K562 (cell line): ENCODE measurements at regions of chr1 and their contacts with region 1.

Region 1: GRCh38 chr1:167627865-167628641 is 2.0 kb upstream of the RCSD1 start:
- DNase-seq: peak; percentile 92 to 98 (median 92)
- ATAC-seq: peak; percentile 80
- H3K4me3 ChIP-seq: peak overlapping the region; percentile 77
- H3K27ac ChIP-seq: peak overlapping the region; percentile 97
- H3K4me1 ChIP-seq: peaks cover 36 to 55% of the 10 kb centered on the region in 2 experiments
- H3K27me3 ChIP-seq: no peaks in the 10 kb centered on the region
- CTCF ChIP-seq: no peak
- EP300 ChIP-seq: peak; percentile 98
- POLR2A ChIP-seq: peak; percentile 96
- RAD21 ChIP-seq: peak in 1 of 2 experiments; percentile 19; a peak in 2 of 4 replicates

Region 2: GRCh38 chr1:167220537-167221125 is 407.4 kb before region 1 on chr1 and contains the start of gene POU2F1:
- CTCF ChIA-PET with region 1: no interaction called
- POLR2A ChIA-PET with region 1: no interaction called
- in situ Hi-C with region 1: no loop called
- intact Hi-C with region 1: loop called (anchors 5 kb)
- DNase-seq: peak; percentile 96 to 99 (median 97)
- ATAC-seq: peak; percentile 82
- H3K4me3 ChIP-seq: peak within 1 kb of the TSS; percentile 69
- H3K27ac ChIP-seq: peak within 1 kb of the TSS; percentile 95
- H3K4me1 ChIP-seq: peaks cover 17 to 26% of the 10 kb centered on the region in 2 experiments; a peak in 4 of 5 replicates
- H3K27me3 ChIP-seq: no peaks in the 10 kb centered on the region
- CTCF ChIP-seq: peak; percentile 62 to 93 (median 93)
- EP300 ChIP-seq: no peak
- POLR2A ChIP-seq: no peak; the same call in none of the 2 replicates
- RAD21 ChIP-seq: peak; percentile 48 to 59
- polyA plus RNA-seq, gene POU2F1: 2.6 to 6.0 TPM

Region 3: GRCh38 chr1:167496797-167497619 is 131.0 kb before region 1 on chr1:
- CTCF ChIA-PET with region 1: no interaction called
- POLR2A ChIA-PET with region 1: no interaction called
- in situ Hi-C with region 1: no loop called
- intact Hi-C with region 1: no loop called
- DNase-seq: no peak
- ATAC-seq: no peak
- H3K4me3 ChIP-seq: no peak overlapping the region
- H3K27ac ChIP-seq: no peak overlapping the region
- H3K4me1 ChIP-seq: peaks cover 0 to 5% of the 10 kb centered on the region in 2 experiments; a peak in 2 of 5 replicates
- H3K27me3 ChIP-seq: peaks cover 73 to 80% of the 10 kb centered on the region in 2 experiments
- CTCF ChIP-seq: no peak
- EP300 ChIP-seq: no peak
- POLR2A ChIP-seq: no peak
- RAD21 ChIP-seq: no peak

Region 4: DNA sequence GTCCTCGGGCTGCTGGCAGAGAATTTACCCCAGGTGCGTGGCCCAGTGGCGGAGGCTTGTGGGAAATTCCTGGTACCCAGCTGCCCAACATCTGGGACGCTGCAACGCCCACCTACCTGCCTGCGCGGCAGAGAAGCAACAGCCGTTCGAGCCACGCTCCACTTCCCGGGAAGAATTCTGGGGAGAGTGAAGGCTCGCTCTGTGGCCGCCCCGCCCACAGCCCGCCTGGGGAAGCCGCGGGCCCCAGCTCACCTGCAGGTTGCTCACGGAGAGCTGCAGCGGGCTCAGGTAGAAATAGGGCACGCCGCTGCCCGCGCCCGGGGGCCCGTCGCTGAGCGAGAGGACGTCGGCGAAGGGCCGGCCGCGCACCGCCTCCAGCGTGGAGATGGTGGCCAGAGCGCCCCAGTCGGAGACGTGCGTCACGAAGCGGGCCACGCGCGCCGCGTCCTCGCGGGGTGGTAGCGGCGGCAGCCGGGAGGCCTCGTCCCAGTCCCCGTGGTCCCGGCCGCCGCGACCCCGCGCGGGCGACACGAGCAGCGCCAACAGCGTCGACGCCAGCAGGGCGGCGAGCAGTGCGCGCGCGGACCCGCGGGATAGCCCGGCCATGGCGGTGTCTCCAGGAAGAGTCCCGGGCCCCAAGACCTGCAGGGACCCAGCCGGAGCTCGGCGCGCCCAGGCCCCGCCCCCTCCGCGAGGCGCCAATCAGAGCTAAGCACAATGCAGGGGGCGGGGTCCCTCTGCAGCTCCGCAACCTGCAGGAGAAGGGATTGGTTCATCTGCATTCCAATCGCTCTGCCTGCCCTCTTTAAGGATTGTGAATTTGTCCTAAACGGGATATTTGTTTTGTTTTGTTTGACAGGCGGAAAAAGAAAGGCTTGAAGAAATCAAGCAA is 74.7 kb before region 1 on chr1 and contains the start of gene CREG1:
- CTCF ChIA-PET with region 1: no interaction called
- POLR2A ChIA-PET with region 1: interaction called, 17 read pairs
- in situ Hi-C with region 1: no loop called
- intact Hi-C with region 1: loop called (anchors 1 kb)
- DNase-seq: peak; percentile 98 to 99 (median 98)
- ATAC-seq: peak; percentile 93
- H3K4me3 ChIP-seq: peak within 1 kb of the TSS; percentile 73
- H3K27ac ChIP-seq: peak within 1 kb of the TSS; percentile 70
- H3K4me1 ChIP-seq: peaks cover 23 to 45% of the 10 kb centered on the region in 2 experiments
- H3K27me3 ChIP-seq: no peaks in the 10 kb centered on the region
- CTCF ChIP-seq: peak in 2 of 3 experiments; percentile 24 to 41; a peak in 2 of 6 replicates
- EP300 ChIP-seq: 0 out of 2 replicates have a peak, but pooled peaks have one; percentile 9
- POLR2A ChIP-seq: peak; percentile 82
- RAD21 ChIP-seq: peak in 1 of 2 experiments; percentile 12; a peak in 1 of 4 replicates
- polyA plus RNA-seq, gene CREG1: 45.7 to 58.2 TPM

Region 5: GRCh38 chr1:167599957-167600581 is 28.0 kb before region 1 on chr1:
- CTCF ChIA-PET with region 1: no interaction called
- POLR2A ChIA-PET with region 1: interaction called, 6 read pairs
- in situ Hi-C with region 1: no loop called
- intact Hi-C with region 1: loop called (anchors 1 kb)
- DNase-seq: peak; percentile 46 to 72 (median 57)
- ATAC-seq: peak; percentile 87
- H3K4me3 ChIP-seq: no peak overlapping the region
- H3K27ac ChIP-seq: 0 out of 3 replicates have a peak overlapping the region, but pooled peaks have one; percentile 19
- H3K4me1 ChIP-seq: peaks cover 13 to 22% of the 10 kb centered on the region in 2 experiments; a peak in 4 of 5 replicates
- H3K27me3 ChIP-seq: no peaks in the 10 kb centered on the region
- CTCF ChIP-seq: peak; percentile 61 to 91 (median 80)
- EP300 ChIP-seq: no peak; the same call in 1 of the 2 replicates
- POLR2A ChIP-seq: no peak
- RAD21 ChIP-seq: peak; percentile 93 to 97

Region 6: DNA sequence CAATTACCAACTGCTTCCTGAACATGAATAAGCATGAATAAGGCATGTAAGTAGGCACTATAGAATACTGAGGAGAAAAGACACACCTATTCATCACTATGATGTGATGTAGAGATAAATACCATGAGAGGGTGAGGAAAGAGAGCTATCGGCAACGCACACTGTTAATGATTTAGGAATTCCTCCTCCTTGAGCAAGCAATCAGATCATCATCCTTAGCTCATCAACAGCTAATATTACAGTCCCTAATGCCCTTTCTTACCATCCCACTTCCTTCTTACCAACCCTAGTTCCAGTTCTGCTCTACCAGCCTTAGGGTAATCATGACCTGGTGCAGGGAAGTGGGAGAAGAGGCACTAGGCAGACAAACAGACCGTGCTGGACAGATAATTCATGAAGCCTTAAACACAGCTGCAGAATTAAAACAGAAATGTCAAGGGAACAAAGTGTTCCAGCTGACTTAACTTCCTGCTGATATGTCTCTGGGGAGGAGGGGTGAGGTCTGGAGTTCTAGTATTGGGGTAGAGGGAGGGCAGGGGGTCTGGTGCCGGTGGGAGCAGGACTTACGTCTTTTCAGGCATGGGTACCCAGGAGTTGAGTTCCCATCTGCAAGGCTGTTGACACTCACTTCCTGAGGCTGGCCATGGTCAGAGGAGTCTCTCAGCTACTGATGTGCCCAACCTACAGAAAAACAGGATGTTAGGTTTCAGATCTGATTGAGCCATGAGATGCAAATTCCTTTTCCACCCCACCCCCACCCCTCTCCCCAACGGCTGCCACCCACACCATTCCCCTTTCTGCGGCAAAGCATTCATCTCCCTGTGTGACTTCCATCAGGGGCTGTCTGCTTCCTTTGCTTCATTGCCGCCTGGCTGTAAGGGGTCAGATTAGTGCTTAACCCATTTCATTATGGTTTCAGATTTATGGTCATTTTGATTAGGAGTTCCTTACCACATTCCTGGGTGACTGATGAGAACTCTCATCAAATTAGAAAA is 10.6 kb before region 1 on chr1:
- CTCF ChIA-PET with region 1: no interaction called
- POLR2A ChIA-PET with region 1: interaction called, 37 read pairs
- in situ Hi-C with region 1: no loop called
- intact Hi-C with region 1: loop called (anchors 1 kb)
- DNase-seq: peak; percentile 53 to 78 (median 68)
- ATAC-seq: peak; percentile 86
- H3K4me3 ChIP-seq: peak overlapping the region; percentile 23
- H3K27ac ChIP-seq: peak overlapping the region; percentile 81
- H3K4me1 ChIP-seq: peaks cover 16 to 40% of the 10 kb centered on the region in 2 experiments
- H3K27me3 ChIP-seq: no peaks in the 10 kb centered on the region
- CTCF ChIP-seq: no peak
- EP300 ChIP-seq: peak; percentile 84
- POLR2A ChIP-seq: peak; percentile 56
- RAD21 ChIP-seq: no peak; a peak in 1 of 4 replicates

Region 7: DNA sequence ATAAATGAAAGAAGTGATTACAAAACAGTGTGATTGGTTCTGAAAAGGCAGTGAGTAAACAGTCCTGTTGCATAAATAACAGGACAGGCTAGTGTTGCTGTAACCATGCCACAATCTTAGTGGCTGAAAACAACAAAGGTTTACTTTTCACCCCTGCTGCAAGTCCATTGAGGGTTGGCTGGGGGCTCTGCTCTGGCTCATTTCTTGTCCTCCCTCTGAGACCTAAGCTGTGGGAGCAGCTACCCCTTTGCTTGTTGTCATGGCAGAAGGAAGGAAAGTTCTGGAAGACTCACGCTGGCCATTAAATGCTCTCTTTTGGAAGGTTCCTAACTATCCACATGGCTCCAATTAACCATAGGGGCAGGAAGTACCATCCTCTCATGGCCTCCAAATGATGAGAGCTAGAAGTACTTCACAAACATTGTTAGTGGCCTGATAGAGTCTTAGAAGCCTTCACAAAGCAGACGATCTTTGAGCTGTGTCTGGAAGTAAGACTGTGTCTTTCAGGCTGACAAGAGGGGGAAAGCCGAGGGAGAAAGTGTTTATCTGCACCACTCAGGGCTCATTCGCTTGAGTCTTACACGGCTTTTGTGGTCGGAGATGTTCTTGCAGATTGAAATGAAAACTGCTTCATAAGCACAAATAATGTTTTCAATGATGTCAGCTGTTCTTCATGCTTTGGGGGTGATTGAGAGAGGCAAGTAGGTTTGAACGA is 13.9 kb after region 1 on chr1:
- CTCF ChIA-PET with region 1: no interaction called
- POLR2A ChIA-PET with region 1: interaction called, 93 read pairs
- in situ Hi-C with region 1: no loop called
- intact Hi-C with region 1: no loop called
- DNase-seq: peak in 2 of 4 experiments; percentile 63 to 79
- ATAC-seq: peak; percentile 75
- H3K4me3 ChIP-seq: no peak overlapping the region
- H3K27ac ChIP-seq: peak overlapping the region; percentile 57
- H3K4me1 ChIP-seq: peaks cover 9 to 38% of the 10 kb centered on the region in 2 experiments; a peak in 4 of 5 replicates
- H3K27me3 ChIP-seq: no peaks in the 10 kb centered on the region
- CTCF ChIP-seq: no peak
- EP300 ChIP-seq: peak; percentile 13; the same call in 1 of the 2 replicates
- POLR2A ChIP-seq: 0 out of 2 replicates have a peak, but pooled peaks have one; percentile 42
- RAD21 ChIP-seq: no peak

Region 8: GRCh38 chr1:167650269-167651160 is 22.5 kb after region 1 on chr1:
- CTCF ChIA-PET with region 1: no interaction called
- POLR2A ChIA-PET with region 1: interaction called, 93 read pairs
- in situ Hi-C with region 1: no loop called
- intact Hi-C with region 1: no loop called
- DNase-seq: no peak
- ATAC-seq: peak; percentile 55
- H3K4me3 ChIP-seq: no peak overlapping the region
- H3K27ac ChIP-seq: no peak overlapping the region
- H3K4me1 ChIP-seq: peaks cover 9 to 10% of the 10 kb centered on the region in 2 experiments; a peak in 4 of 5 replicates
- H3K27me3 ChIP-seq: no peaks in the 10 kb centered on the region
- CTCF ChIP-seq: no peak
- EP300 ChIP-seq: no peak
- POLR2A ChIP-seq: no peak
- RAD21 ChIP-seq: no peak

Region 9: DNA sequence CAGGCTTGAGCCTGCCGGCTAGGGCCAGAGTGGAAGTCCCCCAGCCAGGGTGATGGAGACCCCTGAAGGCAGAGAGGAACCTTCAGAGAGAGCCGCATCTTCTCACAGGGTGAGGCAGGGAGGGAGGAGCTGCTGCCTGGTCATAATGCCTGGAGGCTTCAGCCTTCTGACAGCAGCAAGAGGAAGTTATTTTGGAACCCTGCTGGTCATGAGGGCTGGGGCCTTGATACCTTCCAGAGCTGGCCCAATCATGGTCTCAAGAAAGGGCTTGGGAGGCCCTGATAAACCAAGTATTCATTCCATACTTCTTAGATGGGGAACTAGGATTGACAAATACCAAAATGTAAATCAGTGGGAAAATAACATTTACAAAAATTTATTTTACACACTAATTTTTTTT is 67.1 kb after region 1 on chr1:
- CTCF ChIA-PET with region 1: no interaction called
- POLR2A ChIA-PET with region 1: no interaction called
- in situ Hi-C with region 1: no loop called
- intact Hi-C with region 1: no loop called
- DNase-seq: peak in 1 of 4 experiments; percentile 51
- ATAC-seq: peak; percentile 62
- H3K4me3 ChIP-seq: no peak overlapping the region
- H3K27ac ChIP-seq: no peak overlapping the region
- H3K4me1 ChIP-seq: no peaks in the 10 kb centered on the region; a peak in 1 of 5 replicates
- H3K27me3 ChIP-seq: no peaks in the 10 kb centered on the region
- CTCF ChIP-seq: no peak
- EP300 ChIP-seq: no peak
- POLR2A ChIP-seq: no peak
- RAD21 ChIP-seq: no peak

Region 10: GRCh38 chr1:167899253-167899681 is 271.2 kb after region 1 on chr1:
- CTCF ChIA-PET with region 1: no interaction called
- POLR2A ChIA-PET with region 1: no interaction called
- in situ Hi-C with region 1: no loop called
- intact Hi-C with region 1: no loop called
- DNase-seq: no peak
- ATAC-seq: 0 out of 3 replicates have a peak, but pooled peaks have one; percentile 11
- H3K4me3 ChIP-seq: no peak overlapping the region
- H3K27ac ChIP-seq: no peak overlapping the region
- H3K4me1 ChIP-seq: peaks cover 4 to 5% of the 10 kb centered on the region in 2 experiments; a peak in 3 of 5 replicates
- H3K27me3 ChIP-seq: no peaks in the 10 kb centered on the region
- CTCF ChIP-seq: no peak
- EP300 ChIP-seq: no peak
- POLR2A ChIP-seq: no peak
- RAD21 ChIP-seq: no peak